ENCODE measurements at regions of chr12 and their contacts with region 1.

Region 1: DNA sequence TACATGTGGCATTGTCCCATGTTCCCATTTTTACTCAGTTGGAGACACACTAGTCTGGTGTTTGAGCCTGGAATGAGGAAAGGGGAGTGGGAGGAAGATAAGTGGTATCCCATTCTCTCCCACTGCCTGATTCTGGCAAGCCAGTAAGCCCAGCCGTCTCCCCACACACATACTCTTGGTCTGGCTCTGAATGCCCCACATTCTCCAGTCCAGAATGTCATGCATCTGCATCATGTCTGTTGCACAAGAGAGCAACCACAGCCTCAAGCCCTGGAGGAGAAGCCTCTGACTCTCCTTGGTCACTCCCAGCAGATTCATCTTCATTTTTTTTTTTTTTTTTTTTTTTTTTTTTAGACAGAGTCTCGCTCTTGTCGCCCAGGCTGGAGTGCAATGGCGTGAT is 48.0 kb downstream of the DRAM1 start:
- DNase-seq: peak; percentile 91
- H3K4me3 ChIP-seq: no peak overlapping the region
- H3K27ac ChIP-seq: peak overlapping the region; percentile 44
- H3K4me1 ChIP-seq: peaks cover 12% of the 10 kb centered on the region
- H3K27me3 ChIP-seq: no peaks in the 10 kb centered on the region
- CTCF ChIP-seq: no peak

Region 2: GRCh38 chr12:101759396-101760047 is 165.8 kb before region 1 on chr12:
- CTCF ChIA-PET with region 1: no interaction called
- dilution Hi-C with region 1: no loop called
- in situ Hi-C with region 1: no loop called
- intact Hi-C with region 1: no loop called
- DNase-seq: peak; percentile 19
- H3K4me3 ChIP-seq: no peak overlapping the region
- H3K27ac ChIP-seq: no peak overlapping the region
- H3K4me1 ChIP-seq: no peaks in the 10 kb centered on the region
- H3K27me3 ChIP-seq: no peaks in the 10 kb centered on the region
- CTCF ChIP-seq: peak; percentile 82 to 91

Region 3: DNA sequence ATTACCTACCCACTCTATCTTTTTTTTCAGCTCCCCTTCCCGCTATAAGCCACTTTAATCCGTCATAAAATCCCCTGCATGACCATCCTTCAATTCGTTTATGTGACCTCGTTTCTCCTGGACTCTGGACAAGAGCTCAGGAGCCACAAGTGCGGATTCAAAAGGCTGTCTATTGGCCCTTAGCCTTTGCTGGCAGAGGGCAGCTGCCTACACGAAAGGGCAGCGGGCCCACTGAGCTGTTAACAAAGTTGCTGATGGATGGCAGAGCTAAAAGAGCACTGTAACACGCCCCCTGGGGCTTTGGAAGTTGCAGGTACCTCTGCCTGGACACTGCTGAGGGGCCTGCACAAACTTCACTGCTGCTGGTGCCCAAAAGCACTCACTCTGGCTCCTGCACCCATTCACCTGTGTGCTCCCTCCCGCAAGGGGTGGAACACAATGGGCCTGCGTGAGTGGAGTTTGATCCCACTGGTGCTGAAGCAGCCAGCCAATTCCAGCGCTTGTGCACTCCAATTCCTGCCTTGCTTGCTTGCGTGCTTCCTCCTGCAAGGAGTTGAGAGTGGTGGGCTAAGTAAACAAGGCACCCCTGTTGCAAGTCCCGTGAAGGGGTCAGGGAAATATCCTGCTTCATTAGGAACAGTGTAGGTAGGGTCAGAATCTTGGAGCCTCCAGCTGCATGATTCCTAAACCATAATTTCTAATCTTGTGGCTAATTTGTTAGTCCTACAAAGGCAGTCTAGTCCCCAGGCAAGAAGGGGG is 58.6 kb before region 1 on chr12:
- CTCF ChIA-PET with region 1: no interaction called
- dilution Hi-C with region 1: no loop called
- in situ Hi-C with region 1: no loop called
- intact Hi-C with region 1: no loop called
- DNase-seq: no peak
- H3K4me3 ChIP-seq: no peak overlapping the region
- H3K27ac ChIP-seq: no peak overlapping the region
- H3K4me1 ChIP-seq: peaks cover 5% of the 10 kb centered on the region
- H3K27me3 ChIP-seq: no peaks in the 10 kb centered on the region
- CTCF ChIP-seq: no peak

Region 4: GRCh38 chr12:101992091-101992490 is 66.7 kb after region 1 on chr12:
- CTCF ChIA-PET with region 1: no interaction called
- dilution Hi-C with region 1: no loop called
- in situ Hi-C with region 1: no loop called
- intact Hi-C with region 1: no loop called
- DNase-seq: no peak
- H3K4me3 ChIP-seq: no peak overlapping the region
- H3K27ac ChIP-seq: no peak overlapping the region
- H3K4me1 ChIP-seq: no peaks in the 10 kb centered on the region
- H3K27me3 ChIP-seq: no peaks in the 10 kb centered on the region
- CTCF ChIP-seq: no peak

Region 5: DNA sequence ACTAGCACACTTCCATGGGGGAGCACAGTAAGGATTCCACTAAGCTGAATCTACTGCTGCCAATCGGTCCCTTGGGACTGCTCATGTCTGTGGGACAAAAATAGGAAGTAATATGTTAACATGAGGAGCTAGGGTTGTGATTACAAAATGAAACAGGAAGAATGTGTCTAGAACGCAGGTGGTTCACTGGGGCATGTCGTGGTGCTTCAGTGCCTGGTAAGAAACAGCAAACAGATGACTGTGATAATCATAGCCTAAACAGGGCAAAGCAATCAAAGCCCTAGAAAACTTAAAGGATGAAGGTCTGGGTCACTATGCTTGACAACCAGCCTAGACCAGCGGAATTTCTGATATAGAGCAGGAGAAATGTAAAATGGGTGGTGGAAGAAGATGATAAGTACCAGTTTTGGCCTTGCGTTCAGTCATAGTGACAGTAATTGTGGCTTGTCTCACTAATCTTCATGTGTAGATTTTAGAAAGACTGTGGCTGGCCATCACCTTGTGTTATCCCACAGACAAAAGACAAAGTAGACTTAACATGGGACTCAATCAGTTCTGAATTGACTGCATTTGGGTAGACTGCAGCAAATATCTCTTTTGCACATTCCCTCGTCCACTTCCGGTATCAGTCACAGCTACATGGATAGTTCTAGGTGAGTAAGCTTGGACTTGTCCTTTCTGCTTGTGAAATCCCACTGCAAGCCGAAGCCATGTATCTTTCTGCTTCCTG is 85.1 kb after region 1 on chr12:
- CTCF ChIA-PET with region 1: interaction called, 19 read pairs
- dilution Hi-C with region 1: no loop called
- in situ Hi-C with region 1: no loop called
- intact Hi-C with region 1: no loop called
- DNase-seq: no peak
- H3K4me3 ChIP-seq: no peak overlapping the region
- H3K27ac ChIP-seq: no peak overlapping the region
- H3K4me1 ChIP-seq: no peaks in the 10 kb centered on the region
- H3K27me3 ChIP-seq: no peaks in the 10 kb centered on the region
- CTCF ChIP-seq: no peak

Region 6: GRCh38 chr12:102033991-102034745 is 108.8 kb after region 1 on chr12:
- CTCF ChIA-PET with region 1: interaction called, 14 read pairs
- dilution Hi-C with region 1: no loop called
- in situ Hi-C with region 1: no loop called
- intact Hi-C with region 1: no loop called
- DNase-seq: peak; percentile 43
- H3K4me3 ChIP-seq: no peak overlapping the region
- H3K27ac ChIP-seq: no peak overlapping the region
- H3K4me1 ChIP-seq: no peaks in the 10 kb centered on the region
- H3K27me3 ChIP-seq: no peaks in the 10 kb centered on the region
- CTCF ChIP-seq: no peak

Region 7: GRCh38 chr12:102061560-102062418 is 136.4 kb after region 1 on chr12 and contains the start of gene WASHC3:
- CTCF ChIA-PET with region 1: no interaction called
- dilution Hi-C with region 1: no loop called
- in situ Hi-C with region 1: no loop called
- intact Hi-C with region 1: loop called (anchors 1 kb)
- DNase-seq: peak; percentile 90
- H3K4me3 ChIP-seq: peak within 1 kb of the TSS; percentile 68 to 97 (median 74)
- H3K27ac ChIP-seq: peak within 1 kb of the TSS; percentile 68
- H3K4me1 ChIP-seq: peaks cover 4% of the 10 kb centered on the region
- H3K27me3 ChIP-seq: no peaks in the 10 kb centered on the region
- CTCF ChIP-seq: no peak
- total RNA-seq, gene WASHC3: 48.9 to 61.2 TPM